CD4-positive, alpha-beta memory T cell (primary cell): ENCODE measurements at regions of chr10 and their contacts with region 1.

Region 1: DNA sequence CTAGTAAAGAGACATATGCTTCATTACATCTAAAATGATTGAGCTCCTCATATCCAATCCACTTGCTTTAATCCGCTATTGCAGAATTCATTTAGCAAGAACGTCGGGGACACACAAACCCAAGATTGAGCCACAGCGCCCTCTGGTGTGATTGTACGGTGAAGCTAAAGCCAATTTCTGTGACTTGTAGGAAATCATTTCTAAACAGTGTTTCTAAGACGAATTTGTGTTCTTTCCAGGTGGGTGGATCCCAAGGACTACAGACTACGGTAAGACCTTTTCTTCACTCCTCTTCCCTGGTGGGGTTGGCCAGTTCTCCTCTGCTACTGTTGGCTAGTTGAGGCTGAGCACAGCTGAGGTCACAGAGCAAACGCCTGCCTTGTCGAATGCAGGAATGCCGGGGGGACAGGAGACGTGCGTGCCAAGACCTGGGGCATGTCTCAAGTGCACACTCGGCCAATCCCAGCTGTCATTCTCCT is 5.2 kb downstream of the DMBT1 start:
- DNase-seq: peak; percentile 60 to 70 (median 63)
- H3K4me3 ChIP-seq: no peak overlapping the region
- H3K4me3 Mint-ChIP-seq: peak overlapping the region in 1 of 8 donors; percentile 6
- H3K27ac ChIP-seq: no peak overlapping the region
- H3K27ac Mint-ChIP-seq: no peak overlapping the region
- H3K4me1 ChIP-seq: peaks cover 9% of the 10 kb centered on the region
- H3K4me1 Mint-ChIP-seq: peaks cover 14 to 21% (median 19%) of the 10 kb centered on the region in 4 donors
- H3K27me3 ChIP-seq: no peaks in the 10 kb centered on the region
- H3K27me3 Mint-ChIP-seq: peaks cover 12% of the 10 kb centered on the region in 2 donors

Region 2: DNA sequence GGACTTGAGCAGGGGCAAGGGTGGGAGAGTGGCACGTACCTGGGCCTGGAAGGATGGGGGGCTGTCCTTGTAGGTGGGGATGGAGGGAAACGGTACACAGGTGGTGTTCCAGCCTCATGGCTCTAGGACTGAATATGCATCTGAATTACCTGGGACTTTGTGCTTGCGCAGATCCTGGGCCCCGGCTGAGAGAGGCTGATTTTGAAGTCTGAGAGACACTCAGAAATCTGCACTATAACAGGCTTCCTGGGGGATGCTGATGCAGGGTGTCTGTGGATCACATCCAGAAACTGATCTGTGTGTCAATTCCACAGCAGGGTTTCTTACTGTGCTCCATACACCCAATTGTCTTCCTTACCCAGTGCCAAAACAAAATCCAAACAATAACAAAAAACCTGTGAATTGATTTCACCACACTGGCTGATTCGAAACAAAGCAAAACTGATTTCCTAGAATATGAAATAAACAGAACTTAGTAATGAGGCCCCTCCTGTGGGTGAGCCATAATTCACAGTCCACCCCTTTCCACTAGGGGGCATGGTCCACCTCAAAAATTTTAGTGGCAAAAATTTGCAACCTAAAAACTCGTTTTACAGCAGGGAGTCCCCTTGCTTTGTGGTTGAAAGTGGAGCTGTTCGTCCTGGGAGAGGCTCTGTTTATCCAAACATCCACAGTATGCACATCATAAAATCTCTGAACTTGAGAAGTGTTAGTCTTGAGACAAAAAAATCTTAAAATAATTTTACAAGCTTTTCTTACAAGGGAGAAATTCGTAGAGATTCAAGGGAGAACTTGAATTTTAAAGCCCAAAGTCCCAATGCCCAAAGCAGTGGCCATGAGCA is 223.3 kb before region 1 on chr10:
- CTCF ChIA-PET with region 1: interaction called, 40 read pairs
- POLR2A ChIA-PET with region 1: no interaction called
- intact Hi-C with region 1: loop called (anchors 1 kb)
- DNase-seq: peak; percentile 58 to 68 (median 65)
- H3K4me3 ChIP-seq: no peak overlapping the region
- H3K4me3 Mint-ChIP-seq: no peak overlapping the region
- H3K27ac ChIP-seq: no peak overlapping the region
- H3K27ac Mint-ChIP-seq: peak overlapping the region in 2 of 7 donors; percentile 50 to 75
- H3K4me1 ChIP-seq: no peaks in the 10 kb centered on the region
- H3K4me1 Mint-ChIP-seq: peaks cover 3 to 9% (median 6%) of the 10 kb centered on the region in 4 donors
- H3K27me3 ChIP-seq: no peaks in the 10 kb centered on the region
- H3K27me3 Mint-ChIP-seq: peaks cover 0 to 1% of the 10 kb centered on the region in 2 donors

Region 3: DNA sequence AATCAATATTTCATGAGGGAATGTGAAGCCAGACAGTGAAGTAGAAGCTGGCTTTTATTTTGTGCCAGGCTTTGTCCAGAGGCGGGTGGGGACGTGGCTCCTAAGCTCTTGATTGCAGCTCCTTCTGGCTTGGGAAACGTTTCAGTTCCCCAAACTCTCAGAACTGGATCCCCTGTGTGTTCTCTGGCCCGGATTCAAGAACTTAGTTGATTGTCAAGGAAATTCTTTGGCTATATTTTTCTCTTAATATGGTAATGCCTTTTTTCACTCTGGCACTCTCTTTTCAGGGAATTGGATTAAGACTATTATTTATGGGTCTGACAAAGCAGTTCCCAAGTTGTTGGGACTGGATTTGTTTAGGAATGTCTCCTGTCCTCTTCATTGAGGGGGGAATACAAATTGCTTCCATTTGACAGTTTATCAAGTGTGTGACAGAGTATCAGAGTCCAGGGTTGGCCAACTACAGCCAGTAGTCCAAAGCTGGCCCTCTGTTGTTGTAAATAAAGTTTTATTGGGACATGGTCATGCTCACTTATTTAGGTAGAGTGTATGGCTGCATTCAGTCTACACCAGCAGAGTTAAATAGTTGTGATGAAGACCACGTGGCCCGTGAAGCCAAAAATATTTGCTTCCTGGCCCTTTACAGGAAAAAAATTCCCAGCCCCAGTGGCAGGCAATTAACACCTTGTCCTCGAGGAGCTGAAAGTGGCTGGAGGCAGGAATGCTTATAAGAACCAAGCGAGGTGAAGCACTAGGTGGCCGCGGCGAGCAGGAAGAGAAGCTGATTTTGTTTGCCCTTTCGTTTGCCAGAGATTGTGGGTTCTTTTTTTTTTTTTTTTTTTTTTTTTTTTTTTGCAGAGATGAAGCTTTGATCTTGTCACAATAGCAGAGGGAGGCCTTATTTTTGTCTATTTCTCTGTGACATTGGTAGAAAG is 70.1 kb before region 1 on chr10:
- CTCF ChIA-PET with region 1: interaction called, 33 read pairs
- POLR2A ChIA-PET with region 1: no interaction called
- intact Hi-C with region 1: loop called (anchors 1 kb)
- DNase-seq: peak in 4 of 5 donors; percentile 28 to 44 (median 34)
- H3K4me3 ChIP-seq: no peak overlapping the region
- H3K4me3 Mint-ChIP-seq: peak overlapping the region in 7 of 8 donors; percentile 36 to 90 (median 62)
- H3K27ac ChIP-seq: no peak overlapping the region
- H3K27ac Mint-ChIP-seq: peak overlapping the region in 6 of 7 donors; percentile 15 to 89 (median 63)
- H3K4me1 ChIP-seq: peaks cover 36% of the 10 kb centered on the region
- H3K4me1 Mint-ChIP-seq: peaks cover 23 to 56% (median 41%) of the 10 kb centered on the region in 4 donors
- H3K27me3 ChIP-seq: no peaks in the 10 kb centered on the region
- H3K27me3 Mint-ChIP-seq: no peaks in the 10 kb centered on the region

Region 4: GRCh38 chr10:122525788-122526187 is 40.0 kb before region 1 on chr10:
- CTCF ChIA-PET with region 1: interaction called, 90 read pairs
- POLR2A ChIA-PET with region 1: no interaction called
- intact Hi-C with region 1: loop called (anchors 1 kb)
- DNase-seq: peak in 4 of 5 donors; percentile 18 to 23 (median 22)
- H3K4me3 ChIP-seq: no peak overlapping the region
- H3K4me3 Mint-ChIP-seq: no peak overlapping the region
- H3K27ac ChIP-seq: no peak overlapping the region
- H3K27ac Mint-ChIP-seq: peak overlapping the region in 1 of 7 donors; percentile 7
- H3K4me1 ChIP-seq: no peaks in the 10 kb centered on the region
- H3K4me1 Mint-ChIP-seq: peaks cover 0 to 9% (median 3%) of the 10 kb centered on the region in 4 donors
- H3K27me3 ChIP-seq: no peaks in the 10 kb centered on the region
- H3K27me3 Mint-ChIP-seq: peaks cover 0 to 4% of the 10 kb centered on the region in 2 donors

Region 5: DNA sequence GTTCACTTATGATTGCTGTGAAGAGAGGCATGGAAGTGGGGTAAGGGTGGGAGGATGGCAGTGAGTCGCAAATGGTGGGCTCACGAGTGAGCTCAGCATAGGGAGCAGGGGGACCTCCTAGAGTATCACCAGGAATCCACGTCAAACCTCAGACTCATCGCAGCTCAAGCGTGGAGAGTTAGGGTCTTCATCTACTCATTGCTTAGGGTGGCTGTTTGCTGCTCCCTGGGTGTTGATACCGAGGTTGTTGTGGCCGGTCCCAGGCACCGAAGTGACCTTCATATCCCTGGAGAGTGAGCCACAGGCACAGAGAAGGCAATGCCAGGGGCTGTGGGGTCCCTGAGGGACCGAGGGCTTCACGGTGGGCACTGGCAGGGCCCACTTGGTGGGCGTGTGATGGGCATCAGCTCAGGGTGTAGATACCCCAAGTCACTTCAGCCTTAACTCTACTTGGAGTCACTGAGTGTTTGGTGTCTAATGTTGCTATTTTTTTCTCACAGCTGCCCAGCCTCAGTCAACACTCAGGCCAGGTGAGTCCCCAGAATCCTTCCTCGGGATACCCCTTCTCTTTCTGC is 11.6 kb after region 1 on chr10:
- CTCF ChIA-PET with region 1: interaction called, 25 read pairs
- POLR2A ChIA-PET with region 1: no interaction called
- intact Hi-C with region 1: no loop called
- DNase-seq: no peak
- H3K4me3 ChIP-seq: no peak overlapping the region
- H3K4me3 Mint-ChIP-seq: no peak overlapping the region
- H3K27ac ChIP-seq: no peak overlapping the region
- H3K27ac Mint-ChIP-seq: no peak overlapping the region
- H3K4me1 ChIP-seq: no peaks in the 10 kb centered on the region
- H3K4me1 Mint-ChIP-seq: no peaks in the 10 kb centered on the region
- H3K27me3 ChIP-seq: no peaks in the 10 kb centered on the region
- H3K27me3 Mint-ChIP-seq: peaks cover 0 to 4% of the 10 kb centered on the region in 2 donors

Region 6: DNA sequence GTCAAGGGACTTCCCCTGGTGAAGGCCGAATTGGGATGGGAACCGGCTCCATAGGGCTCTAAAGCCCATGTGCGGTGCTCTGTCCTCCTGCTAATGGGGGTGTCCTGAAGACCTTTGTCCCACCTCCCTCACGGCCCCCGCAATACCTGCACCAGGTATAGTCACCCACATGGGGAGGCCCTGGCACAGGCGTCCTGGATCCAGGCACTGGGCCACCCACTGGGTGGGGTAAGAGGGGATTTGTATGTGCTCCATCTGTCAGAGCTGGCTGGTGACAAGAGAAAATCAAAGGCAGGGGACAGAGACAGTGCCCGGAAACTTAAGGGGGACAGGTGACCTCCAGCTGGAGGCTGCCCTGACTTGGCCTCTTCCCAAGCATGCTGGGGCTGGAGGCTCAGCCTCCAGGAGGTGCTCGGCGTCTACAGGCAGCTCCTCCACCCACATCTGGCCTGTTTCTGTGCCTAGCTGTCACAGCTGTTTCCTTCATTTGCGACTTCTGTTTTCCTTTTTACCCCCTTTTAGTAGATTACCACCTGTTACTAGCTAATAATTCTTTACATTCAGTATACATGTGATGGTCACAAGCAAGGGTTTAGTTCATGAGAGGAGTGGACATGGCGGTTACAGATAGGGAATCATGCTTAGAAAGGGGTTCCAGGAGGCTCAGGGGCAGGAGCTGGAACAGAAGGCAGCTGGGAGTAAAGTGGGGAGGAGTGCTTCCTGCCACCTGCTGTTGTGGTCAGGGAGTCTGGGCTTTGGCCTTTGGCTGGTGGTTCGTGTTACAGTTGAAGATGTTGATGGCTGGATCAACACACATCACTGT is 282.2 kb after region 1 on chr10:
- CTCF ChIA-PET with region 1: no interaction called
- POLR2A ChIA-PET with region 1: no interaction called
- intact Hi-C with region 1: no loop called
- DNase-seq: no peak
- H3K4me3 ChIP-seq: no peak overlapping the region
- H3K4me3 Mint-ChIP-seq: no peak overlapping the region
- H3K27ac ChIP-seq: no peak overlapping the region
- H3K27ac Mint-ChIP-seq: peak overlapping the region in 2 of 7 donors; percentile 54 to 75
- H3K4me1 ChIP-seq: no peaks in the 10 kb centered on the region
- H3K4me1 Mint-ChIP-seq: peaks cover 0 to 5% (median 2%) of the 10 kb centered on the region in 4 donors
- H3K27me3 ChIP-seq: no peaks in the 10 kb centered on the region
- H3K27me3 Mint-ChIP-seq: no peaks in the 10 kb centered on the region